T-cell (primary cell): ENCODE measurements at regions of chr13 and their contacts with region 1.

Region 1: DNA sequence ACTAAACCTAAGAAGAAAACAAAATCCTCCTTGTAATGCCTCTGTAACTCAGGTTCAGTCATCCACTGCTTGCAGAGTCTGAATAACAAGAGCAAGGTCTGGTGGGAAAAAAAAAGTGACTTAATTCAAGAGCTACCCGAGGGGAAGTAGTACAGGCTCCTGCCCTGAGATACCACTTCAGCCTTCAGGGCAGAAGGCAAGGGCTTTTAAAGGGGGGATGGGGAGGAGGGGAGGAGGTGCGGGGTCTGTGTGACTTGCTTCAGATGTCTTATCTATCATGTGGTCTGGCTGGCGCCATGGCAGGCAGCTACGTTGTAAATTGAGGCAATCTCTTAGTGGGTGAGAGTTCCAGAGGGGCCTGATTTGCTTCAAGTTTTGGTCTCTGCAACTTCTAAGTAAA is 66.7 kb downstream of the LRRC63 start:
- DNase-seq: no peak
- ATAC-seq: no peak
- H3K4me3 ChIP-seq: no peak overlapping the region
- H3K4me3 Mint-ChIP-seq: no peak overlapping the region
- H3K27ac ChIP-seq: no peak overlapping the region
- H3K27ac Mint-ChIP-seq: no peak overlapping the region
- H3K4me1 ChIP-seq: no peaks in the 10 kb centered on the region
- H3K4me1 Mint-ChIP-seq: no peaks in the 10 kb centered on the region
- H3K27me3 ChIP-seq: no peaks in the 10 kb centered on the region
- H3K27me3 Mint-ChIP-seq: peaks cover 0 to 2% of the 10 kb centered on the region in 2 donors

Region 2: GRCh38 chr13:46103037-46103436 is 175.4 kb before region 1 on chr13:
- CTCF ChIA-PET with region 1: no interaction called
- POLR2A ChIA-PET with region 1: interaction called in 1 of 2 experiments, 13 read pairs
- DNase-seq: no peak
- ATAC-seq: no peak
- H3K4me3 ChIP-seq: no peak overlapping the region
- H3K4me3 Mint-ChIP-seq: no peak overlapping the region
- H3K27ac ChIP-seq: no peak overlapping the region
- H3K27ac Mint-ChIP-seq: no peak overlapping the region
- H3K4me1 ChIP-seq: no peaks in the 10 kb centered on the region
- H3K4me1 Mint-ChIP-seq: peaks cover 5 to 13% (median 8%) of the 10 kb centered on the region in 3 donors
- H3K27me3 ChIP-seq: no peaks in the 10 kb centered on the region
- H3K27me3 Mint-ChIP-seq: peaks cover 0 to 1% of the 10 kb centered on the region in 2 donors

Region 3: DNA sequence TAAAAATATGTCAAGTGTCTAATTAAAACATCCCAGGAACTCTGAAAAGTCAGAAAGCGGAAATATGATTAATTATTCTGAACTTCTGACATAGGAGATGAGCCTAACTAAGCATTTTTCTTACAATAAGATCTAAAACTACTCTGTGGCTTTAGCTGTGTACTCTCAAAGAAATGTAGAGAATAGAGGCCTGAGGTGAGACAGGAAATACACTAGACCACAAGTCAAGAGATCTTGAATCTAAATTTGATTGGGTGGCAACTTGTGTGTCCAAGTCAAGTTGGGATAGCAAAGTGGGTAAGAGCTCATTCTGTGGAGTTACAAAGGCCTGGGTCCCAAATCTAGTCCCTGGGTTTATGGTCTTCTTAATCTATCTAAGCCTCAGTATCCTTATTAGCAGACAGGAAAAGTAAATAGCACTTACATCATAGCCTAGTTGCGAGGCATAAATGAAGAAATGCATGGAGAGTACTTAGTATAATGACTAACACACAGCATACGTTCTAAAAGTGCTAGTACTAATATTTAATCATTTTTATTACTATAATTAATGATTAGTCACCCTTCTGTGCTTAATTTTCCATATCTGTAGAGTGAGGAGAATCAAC is 76.2 kb before region 1 on chr13:
- CTCF ChIA-PET with region 1: no interaction called
- POLR2A ChIA-PET with region 1: no interaction called
- DNase-seq: peak in 1 of 35 experiments; percentile 47
- ATAC-seq: peak; percentile 68 to 92 (median 88)
- H3K4me3 ChIP-seq: no peak overlapping the region
- H3K4me3 Mint-ChIP-seq: peak overlapping the region; percentile 6 to 52 (median 50)
- H3K27ac ChIP-seq: peak overlapping the region; percentile 62
- H3K27ac Mint-ChIP-seq: peak overlapping the region; percentile 81 to 90
- H3K4me1 ChIP-seq: peaks cover 16 to 23% of the 10 kb centered on the region in 2 experiments
- H3K4me1 Mint-ChIP-seq: peaks cover 35 to 53% (median 49%) of the 10 kb centered on the region in 3 donors
- H3K27me3 ChIP-seq: no peaks in the 10 kb centered on the region
- H3K27me3 Mint-ChIP-seq: no peaks in the 10 kb centered on the region